BJ (cell line): ENCODE measurements at regions of chr15 and their contacts with region 1.

Region 1: DNA sequence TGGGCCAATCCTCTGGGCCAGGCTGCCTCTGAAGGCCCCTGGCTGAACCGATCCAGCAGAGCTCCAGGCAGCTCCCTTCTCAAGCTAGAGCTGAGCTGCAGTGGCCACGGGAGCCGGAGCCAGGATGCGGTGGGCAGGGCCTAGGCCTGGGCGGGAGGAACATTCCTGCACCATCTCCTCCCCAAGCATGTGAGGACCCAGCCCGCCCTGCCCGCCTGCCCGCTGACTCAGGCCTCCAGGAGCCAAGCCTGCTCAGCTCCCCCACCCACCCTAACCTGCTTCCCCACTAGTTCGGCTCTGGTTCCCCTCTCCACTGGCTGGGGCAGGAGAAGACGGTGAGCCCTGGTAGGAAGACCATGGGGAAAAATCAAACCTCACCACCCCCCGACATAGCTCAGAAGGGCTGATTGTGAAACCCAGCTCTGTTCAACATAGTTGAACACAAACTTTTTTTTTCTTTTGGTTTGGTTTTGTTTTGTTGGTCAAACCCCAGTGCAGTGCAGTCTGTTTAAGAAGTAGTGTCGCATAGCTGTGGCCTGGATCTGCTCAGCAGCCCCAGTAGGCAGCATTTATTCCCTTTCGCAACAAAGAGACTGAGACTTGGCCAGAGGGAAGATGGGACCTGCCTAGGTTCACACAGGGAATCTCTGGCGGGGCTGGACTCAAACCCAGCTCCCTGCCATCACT is 13.5 kb downstream of the SNX33 start:
- DNase-seq: peak; percentile 80
- H3K4me3 ChIP-seq: no peak overlapping the region
- H3K27me3 ChIP-seq: no peaks in the 10 kb centered on the region
- CTCF ChIP-seq: no peak

Region 2: DNA sequence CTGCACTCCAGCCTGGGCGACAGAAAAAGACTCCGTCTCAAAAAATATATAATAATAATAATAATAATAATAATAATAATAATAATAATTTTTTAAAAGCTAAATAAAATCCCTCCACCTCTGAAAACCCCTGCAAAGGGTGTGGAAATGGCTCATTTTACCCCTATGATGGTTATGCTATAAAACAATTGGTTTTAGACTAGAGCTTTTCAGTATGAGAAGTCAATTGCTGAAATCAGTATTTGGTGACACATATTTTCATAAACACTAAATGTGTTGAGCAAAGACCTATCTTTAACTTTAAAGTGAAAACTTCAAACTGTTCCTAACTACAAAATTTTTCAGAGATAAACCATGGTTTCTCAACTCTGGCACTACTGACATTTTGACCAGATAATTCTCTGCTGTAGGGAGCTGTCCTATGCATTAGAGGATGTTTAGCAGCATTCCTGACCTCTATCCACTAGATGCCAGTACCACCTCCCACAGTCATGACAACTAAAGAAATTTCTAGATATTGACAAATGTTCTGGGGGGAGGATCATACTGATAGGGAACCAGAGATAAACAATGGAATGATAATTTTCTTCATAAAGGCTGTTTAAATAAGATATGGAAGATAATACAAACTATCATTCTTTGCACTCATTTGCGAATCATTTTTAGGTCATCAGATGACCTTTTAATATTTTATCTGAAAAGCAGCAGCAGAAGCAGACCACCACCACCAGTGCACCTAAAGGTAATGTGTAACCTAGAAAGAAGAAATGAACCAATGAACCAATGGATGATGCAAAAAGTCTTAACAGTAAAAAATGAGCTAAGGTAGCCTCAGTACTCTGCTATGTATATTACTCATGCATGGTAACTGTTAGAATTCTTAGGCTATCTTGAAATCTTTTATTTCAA is 95.9 kb before region 1 on chr15:
- CTCF ChIA-PET with region 1: no interaction called
- POLR2A ChIA-PET with region 1: interaction called, 12 read pairs
- DNase-seq: no peak
- H3K4me3 ChIP-seq: no peak overlapping the region
- H3K27me3 ChIP-seq: no peaks in the 10 kb centered on the region
- CTCF ChIP-seq: no peak

Region 3: GRCh38 chr15:75578948-75579920 is 82.0 kb before region 1 on chr15 and contains the start of gene PTPN9:
- CTCF ChIA-PET with region 1: no interaction called
- POLR2A ChIA-PET with region 1: no interaction called
- DNase-seq: no peak
- H3K4me3 ChIP-seq: peak within 1 kb of the TSS; percentile 80
- H3K27me3 ChIP-seq: no peaks in the 10 kb centered on the region
- CTCF ChIP-seq: peak; percentile 58
- polyA plus RNA-seq, gene PTPN9: 48.6 and 55.5 TPM in 2 replicates

Region 4: DNA sequence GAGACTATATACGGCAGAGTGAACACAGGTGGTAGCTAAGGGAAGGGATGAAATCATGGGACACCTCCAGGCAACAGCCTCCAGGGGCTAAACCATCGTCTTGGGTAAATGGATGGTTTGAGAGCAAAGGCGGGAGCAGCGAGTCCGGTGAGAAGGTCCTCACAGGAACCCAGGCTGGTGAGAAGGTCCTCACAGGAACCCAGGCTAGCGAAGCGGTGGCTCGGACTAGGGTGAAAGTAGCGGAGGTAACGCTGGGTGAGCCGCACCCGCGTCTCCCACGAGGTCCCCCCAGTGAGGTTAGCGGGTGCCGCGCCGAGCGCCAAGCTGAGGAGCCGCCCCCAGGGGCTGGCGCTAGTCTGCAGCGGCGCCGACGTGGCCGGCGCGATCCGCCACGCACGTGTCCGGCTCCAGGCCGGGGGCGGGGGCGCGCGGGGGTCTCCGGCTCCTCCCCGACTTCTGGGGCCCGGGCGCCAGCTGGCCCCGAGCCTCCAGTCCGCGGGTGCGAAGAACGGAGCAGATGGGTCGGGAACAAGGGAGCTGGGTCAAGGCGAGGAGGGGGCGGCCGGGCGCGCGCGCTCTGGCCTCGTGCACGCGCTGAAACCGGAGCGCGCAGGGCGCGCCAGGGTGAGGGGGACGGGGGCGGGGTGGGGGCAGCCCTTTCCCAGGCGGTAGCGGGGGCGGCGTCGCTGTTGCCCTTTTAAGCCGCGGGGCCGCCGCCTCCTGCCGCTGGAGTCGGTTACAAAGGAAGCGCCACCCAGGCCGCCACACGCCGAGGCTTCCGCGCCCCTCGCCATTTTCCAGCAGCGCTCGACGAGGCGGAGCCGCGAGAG is 181.7 kb after region 1 on chr15 and contains the start of gene UBE2Q2:
- CTCF ChIA-PET with region 1: no interaction called
- POLR2A ChIA-PET with region 1: no interaction called
- DNase-seq: peak; percentile 3
- H3K4me3 ChIP-seq: peak within 1 kb of the TSS; percentile 80
- H3K27me3 ChIP-seq: no peaks in the 10 kb centered on the region
- CTCF ChIP-seq: no peak
- polyA plus RNA-seq, gene UBE2Q2: 22.6 and 33.9 TPM in 2 replicates

Region 5: GRCh38 chr15:75884041-75884440 is 222.8 kb after region 1 on chr15:
- CTCF ChIA-PET with region 1: no interaction called
- POLR2A ChIA-PET with region 1: no interaction called
- DNase-seq: no peak
- H3K4me3 ChIP-seq: no peak overlapping the region
- H3K27me3 ChIP-seq: no peaks in the 10 kb centered on the region
- CTCF ChIP-seq: no peak